ENCODE measurements at regions of chr21 and their contacts with region 1.

Region 1: DNA sequence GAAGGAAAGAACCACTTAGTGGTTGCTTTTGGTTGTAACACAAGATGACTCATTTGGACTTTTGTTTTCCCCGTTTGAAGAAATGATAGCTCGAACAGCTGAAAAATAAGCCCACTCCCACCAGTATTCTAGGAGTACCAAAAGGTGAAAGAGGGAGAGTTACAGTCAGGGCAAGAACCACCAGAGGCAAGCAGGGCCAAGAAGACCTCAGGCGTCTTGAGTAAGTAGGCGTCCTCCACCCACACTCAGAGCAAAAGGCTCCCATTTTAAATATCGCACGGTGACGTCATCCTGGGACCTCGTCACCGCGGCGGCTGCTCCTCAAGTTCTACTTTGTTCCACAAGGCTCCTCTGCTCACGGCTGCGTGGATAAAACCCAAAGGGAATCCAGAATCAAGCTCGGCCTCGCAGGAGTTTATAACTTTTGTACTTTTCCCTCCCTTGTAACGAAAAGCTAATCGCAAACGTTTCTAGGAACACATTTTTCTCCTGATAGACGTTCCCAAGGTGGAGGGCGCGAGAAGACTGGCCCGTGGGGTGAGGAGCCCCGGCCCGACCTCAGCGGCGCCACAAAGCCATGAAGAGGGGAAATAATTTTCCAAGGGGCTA is 1.2 kb downstream of the BTG3 start:
- DNase-seq: peak; percentile 54 to 92 (median 72)
- ATAC-seq: peak; percentile 69
- H3K4me3 ChIP-seq: peak overlapping the region; percentile 91
- H3K4me3 Mint-ChIP-seq: peak overlapping the region; percentile 93
- H3K27ac ChIP-seq: peak overlapping the region; percentile 58 to 60
- H3K27ac Mint-ChIP-seq: peak overlapping the region; percentile 89
- H3K4me1 ChIP-seq: peaks cover 17% of the 10 kb centered on the region
- H3K4me1 Mint-ChIP-seq: peaks cover 40% of the 10 kb centered on the region
- H3K27me3 ChIP-seq: no peaks in the 10 kb centered on the region
- H3K27me3 Mint-ChIP-seq: no peaks in the 10 kb centered on the region
- CTCF ChIP-seq: no peak

Region 2: DNA sequence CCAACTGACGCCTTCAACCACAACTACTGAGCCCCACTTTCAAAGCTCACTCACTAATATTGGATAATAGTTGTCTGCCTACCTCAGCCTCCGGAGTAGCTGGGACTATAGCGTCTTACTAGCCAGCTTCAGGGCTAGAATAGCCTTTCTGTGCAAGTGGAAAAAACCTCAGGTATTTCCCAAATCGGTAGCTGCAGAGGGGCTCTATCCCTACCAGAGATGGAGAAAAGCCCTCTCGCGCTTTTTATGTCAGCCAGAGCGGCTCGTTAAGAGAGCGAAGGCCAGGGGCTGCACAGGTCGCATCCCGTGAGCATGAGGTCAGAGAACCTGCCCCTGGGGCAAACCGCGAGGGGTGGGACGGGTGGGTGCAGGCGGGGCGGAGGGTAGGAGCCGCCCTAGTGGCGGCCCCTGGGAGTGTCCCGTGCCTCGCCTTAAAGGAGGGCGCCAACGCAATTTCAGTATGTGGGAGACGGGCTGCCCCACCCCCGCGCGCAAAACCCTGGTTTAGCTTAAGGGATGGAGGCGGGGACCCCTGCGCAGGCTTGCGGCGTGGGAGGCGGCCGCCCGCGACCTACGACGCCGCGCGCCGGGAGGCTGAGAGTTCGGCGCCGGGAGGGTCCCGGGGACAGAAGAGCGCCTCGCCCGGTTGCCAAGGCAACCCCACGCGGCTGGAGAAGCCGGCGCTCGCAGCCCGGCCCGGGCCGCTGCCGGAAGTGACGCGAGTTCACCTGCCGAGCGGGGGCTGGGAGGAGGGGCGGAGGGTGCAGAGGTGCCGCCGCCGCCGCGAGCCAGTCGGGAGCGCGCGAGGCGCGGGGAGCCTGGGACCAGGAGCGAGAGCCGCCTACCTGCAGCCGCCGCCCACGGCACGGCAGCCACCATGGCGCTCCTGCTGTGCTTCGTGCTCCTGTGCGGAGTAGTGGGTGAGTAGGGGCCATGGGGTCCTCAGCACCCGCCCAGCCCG is 99.0 kb before region 1 on chr21 and contains the start of gene CXADR:
- CTCF ChIA-PET with region 1: interaction called, 4 read pairs
- POLR2A ChIA-PET with region 1: no interaction called
- intact Hi-C with region 1: loop called (anchors 2 kb)
- DNase-seq: peak; percentile 58 to 93 (median 77)
- ATAC-seq: peak; percentile 81
- H3K4me3 ChIP-seq: peak within 1 kb of the TSS; percentile 70
- H3K4me3 Mint-ChIP-seq: peak within 1 kb of the TSS; percentile 92
- H3K27ac ChIP-seq: no peak within 1 kb of the TSS
- H3K27ac Mint-ChIP-seq: peak within 1 kb of the TSS; percentile 40
- H3K4me1 ChIP-seq: peaks cover 21% of the 10 kb centered on the region
- H3K4me1 Mint-ChIP-seq: peaks cover 18% of the 10 kb centered on the region
- H3K27me3 ChIP-seq: no peaks in the 10 kb centered on the region
- H3K27me3 Mint-ChIP-seq: peaks cover 10% of the 10 kb centered on the region
- CTCF ChIP-seq: peak; percentile 56
- total RNA-seq, gene CXADR: 0.52 to 0.53 TPM

Region 3: DNA sequence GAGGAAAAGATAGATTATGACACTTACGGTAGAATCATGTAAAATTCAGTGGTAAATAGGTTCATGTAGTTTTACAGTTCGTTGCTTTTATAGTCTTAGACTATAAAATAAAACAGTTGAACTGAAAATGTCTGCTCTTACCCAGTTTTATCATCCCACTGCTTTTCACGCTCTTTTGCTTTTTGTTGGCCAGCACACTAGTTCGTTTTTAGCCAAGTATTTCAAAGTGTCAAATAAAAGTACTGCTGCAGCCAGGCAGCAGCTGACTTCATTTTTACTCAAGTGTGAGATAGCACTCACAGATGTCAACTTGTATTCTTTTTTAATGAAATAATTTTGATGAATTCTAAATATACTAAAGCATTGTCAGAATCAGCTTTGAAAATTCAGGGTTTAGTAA is 19.7 kb after region 1 on chr21:
- CTCF ChIA-PET with region 1: no interaction called
- POLR2A ChIA-PET with region 1: no interaction called
- intact Hi-C with region 1: no loop called
- DNase-seq: no peak
- ATAC-seq: no peak
- H3K4me3 ChIP-seq: no peak overlapping the region
- H3K4me3 Mint-ChIP-seq: no peak overlapping the region
- H3K27ac ChIP-seq: no peak overlapping the region
- H3K27ac Mint-ChIP-seq: no peak overlapping the region
- H3K4me1 ChIP-seq: no peaks in the 10 kb centered on the region
- H3K4me1 Mint-ChIP-seq: no peaks in the 10 kb centered on the region
- H3K27me3 ChIP-seq: peaks cover 0 to 2% of the 10 kb centered on the region in 2 experiments
- H3K27me3 Mint-ChIP-seq: peaks cover 4% of the 10 kb centered on the region
- CTCF ChIP-seq: no peak

Region 4: GRCh38 chr21:17793246-17794123 is 182.0 kb after region 1 on chr21:
- CTCF ChIA-PET with region 1: interaction called, 3 read pairs
- POLR2A ChIA-PET with region 1: interaction called, 3 read pairs
- intact Hi-C with region 1: loop called (anchors 5 to 10 kb)
- DNase-seq: peak in 3 of 14 experiments; percentile 57 to 79 (median 58)
- ATAC-seq: peak; percentile 61
- H3K4me3 ChIP-seq: peak overlapping the region; percentile 48
- H3K4me3 Mint-ChIP-seq: peak overlapping the region; percentile 84
- H3K27ac ChIP-seq: peak overlapping the region; percentile 61 to 81
- H3K27ac Mint-ChIP-seq: peak overlapping the region; percentile 94
- H3K4me1 ChIP-seq: peaks cover 13% of the 10 kb centered on the region
- H3K4me1 Mint-ChIP-seq: peaks cover 78% of the 10 kb centered on the region
- H3K27me3 ChIP-seq: no peaks in the 10 kb centered on the region
- H3K27me3 Mint-ChIP-seq: no peaks in the 10 kb centered on the region
- CTCF ChIP-seq: no peak